HepG2 (cell line): ENCODE measurements at regions of chr14 and their contacts with region 1.

Region 1: DNA sequence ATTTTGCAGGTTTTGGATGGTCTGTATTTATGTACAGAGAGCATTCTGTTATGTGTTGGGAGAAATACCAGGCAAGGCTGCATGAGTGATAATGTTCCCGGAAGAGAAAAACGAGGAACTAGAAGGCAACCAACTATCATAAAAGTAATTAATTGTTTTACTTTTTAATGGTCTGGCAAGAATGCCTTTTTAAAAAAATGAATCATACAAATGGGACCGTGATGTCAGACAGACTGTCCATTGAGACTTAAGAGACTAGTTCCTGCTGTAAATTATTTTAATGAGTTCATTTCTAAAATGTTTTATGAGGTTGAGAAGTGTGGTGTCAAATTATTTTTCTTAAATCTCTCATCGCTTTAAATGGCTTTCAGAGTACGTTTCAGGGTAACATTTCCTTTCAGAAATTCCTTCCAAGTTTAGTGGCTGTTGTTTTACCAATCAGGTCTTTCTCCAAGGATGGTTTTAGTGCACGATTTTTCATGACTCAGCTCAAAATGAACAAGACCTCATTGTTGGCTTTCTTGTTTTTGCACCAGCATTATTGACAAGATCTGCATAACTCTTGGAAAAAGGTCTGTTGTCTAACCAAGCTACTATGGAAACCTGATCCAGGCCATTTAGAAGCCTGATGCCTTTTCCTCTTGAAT is 86.1 kb upstream of the ARHGAP5 start:
- DNase-seq: peak; percentile 77
- ATAC-seq: no peak
- H3K4me3 ChIP-seq: no peak overlapping the region
- H3K27ac ChIP-seq: no peak overlapping the region
- H3K4me1 ChIP-seq: peaks cover 30% of the 10 kb centered on the region
- H3K27me3 ChIP-seq: peaks cover 0 to 11% of the 10 kb centered on the region in 2 experiments; a peak in 2 of 5 replicates
- CTCF ChIP-seq: no peak
- EP300 ChIP-seq: no peak
- POLR2A ChIP-seq: no peak
- RAD21 ChIP-seq: no peak

Region 2: DNA sequence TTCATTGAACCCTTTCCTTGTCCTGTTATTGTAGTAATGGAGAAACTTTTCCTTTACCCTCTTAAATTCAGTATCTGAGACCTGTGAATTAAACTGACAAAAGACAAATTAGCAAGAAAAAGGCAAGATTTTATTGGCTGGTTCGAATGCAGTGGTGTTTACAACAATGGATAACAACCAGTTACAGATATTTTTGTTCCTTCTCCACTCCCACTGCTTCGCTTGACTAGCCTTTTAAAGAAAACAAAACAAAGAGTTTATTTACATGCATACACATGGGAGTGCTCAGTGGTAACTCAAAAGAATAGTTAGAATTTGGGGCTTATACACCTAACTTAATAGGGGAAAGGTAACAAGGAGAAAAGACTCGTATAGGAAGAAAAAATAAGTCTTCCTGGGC is 746.4 kb before region 1 on chr14:
- CTCF ChIA-PET with region 1: no interaction called
- POLR2A ChIA-PET with region 1: no interaction called
- in situ Hi-C with region 1: no loop called
- intact Hi-C with region 1: loop called (anchors 5 kb)
- DNase-seq: no peak
- ATAC-seq: no peak
- H3K4me3 ChIP-seq: no peak overlapping the region
- H3K27ac ChIP-seq: no peak overlapping the region
- H3K4me1 ChIP-seq: peaks cover 27% of the 10 kb centered on the region
- H3K27me3 ChIP-seq: no peaks in the 10 kb centered on the region
- CTCF ChIP-seq: no peak
- EP300 ChIP-seq: no peak
- POLR2A ChIP-seq: no peak
- RAD21 ChIP-seq: no peak

Region 3: DNA sequence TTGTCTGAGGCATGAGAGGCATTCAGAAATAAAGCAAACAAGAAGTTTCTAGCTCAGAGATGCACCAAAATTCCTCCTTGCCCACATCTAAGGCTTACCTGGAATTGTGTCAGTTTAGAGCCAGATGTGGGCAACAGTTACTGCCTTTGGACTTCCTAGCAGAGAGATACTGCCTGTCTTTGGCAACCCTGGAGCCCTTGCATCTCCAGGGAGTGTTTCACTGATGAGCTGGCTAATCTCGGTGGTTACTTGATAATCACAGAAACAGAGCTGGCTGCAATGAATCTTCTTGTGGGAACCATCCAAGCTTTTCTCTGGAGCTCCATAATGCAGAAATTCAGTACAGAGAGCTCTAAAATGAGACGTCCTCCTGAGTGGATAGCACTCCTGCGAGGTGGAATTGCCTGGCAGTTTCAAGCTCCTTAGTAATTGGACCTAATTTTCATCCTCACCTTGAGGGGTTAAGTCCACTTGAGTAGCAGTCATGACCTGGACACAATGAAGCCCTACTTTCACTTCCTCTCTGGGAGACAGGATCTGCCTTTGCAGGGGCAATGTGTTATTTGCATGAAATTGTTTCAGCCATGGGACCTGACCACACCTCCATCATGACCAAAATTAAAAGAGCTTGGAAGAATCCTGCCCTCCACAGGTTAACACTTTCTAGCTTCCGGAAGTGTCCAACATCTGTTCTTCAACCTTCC is 22.8 kb before region 1 on chr14:
- CTCF ChIA-PET with region 1: no interaction called
- POLR2A ChIA-PET with region 1: no interaction called
- in situ Hi-C with region 1: no loop called
- intact Hi-C with region 1: loop called (anchors 2 kb)
- DNase-seq: peak; percentile 86
- ATAC-seq: peak; percentile 10
- H3K4me3 ChIP-seq: peak overlapping the region in 1 of 3 experiments; percentile 20; a peak in 1 of 6 replicates
- H3K27ac ChIP-seq: no peak overlapping the region
- H3K4me1 ChIP-seq: peaks cover 53% of the 10 kb centered on the region
- H3K27me3 ChIP-seq: no peaks in the 10 kb centered on the region
- CTCF ChIP-seq: no peak
- EP300 ChIP-seq: peak in 1 of 2 experiments; percentile 43; a peak in 2 of 4 replicates
- POLR2A ChIP-seq: no peak
- RAD21 ChIP-seq: no peak

Region 4: GRCh38 chr14:32728971-32729370 is 737.9 kb after region 1 on chr14:
- CTCF ChIA-PET with region 1: no interaction called
- POLR2A ChIA-PET with region 1: no interaction called
- in situ Hi-C with region 1: no loop called
- intact Hi-C with region 1: no loop called
- DNase-seq: no peak
- ATAC-seq: no peak
- H3K4me3 ChIP-seq: no peak overlapping the region
- H3K27ac ChIP-seq: no peak overlapping the region
- H3K4me1 ChIP-seq: no peaks in the 10 kb centered on the region
- H3K27me3 ChIP-seq: no peaks in the 10 kb centered on the region
- CTCF ChIP-seq: no peak
- EP300 ChIP-seq: no peak
- POLR2A ChIP-seq: no peak
- RAD21 ChIP-seq: no peak